Activated B cell treated with CpG ODN at 0.5 μM for 24 hours (primary cell): ENCODE measurements at regions of chr10 and their contacts with region 1.

Region 1: DNA sequence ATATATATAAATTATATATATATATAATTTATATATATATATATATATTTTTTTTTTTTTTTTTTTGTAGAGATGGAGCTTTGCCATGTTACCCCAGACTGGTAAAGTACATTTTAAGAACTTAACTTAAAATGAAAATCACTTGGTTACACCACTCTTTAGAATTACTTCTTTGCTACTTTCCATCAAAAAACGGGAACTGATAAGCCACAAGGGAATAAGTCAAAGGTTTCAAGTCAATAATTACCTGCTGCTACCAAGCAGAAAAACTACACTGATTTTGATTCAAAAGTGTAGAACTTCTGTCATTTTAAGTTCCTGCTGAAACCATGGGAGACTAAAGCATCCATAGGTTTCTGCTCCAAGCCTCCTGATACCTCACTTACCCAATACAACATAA is 12.2 kb downstream of the PPA1 start:
- DNase-seq: no peak
- ATAC-seq: peak; percentile 42
- H3K4me3 Mint-ChIP-seq: peak overlapping the region; percentile 25
- H3K27ac Mint-ChIP-seq: no peak overlapping the region
- H3K4me1 Mint-ChIP-seq: peaks cover 17% of the 10 kb centered on the region
- H3K27me3 Mint-ChIP-seq: no peaks in the 10 kb centered on the region
- CTCF ChIP-seq: no peak

Region 2: GRCh38 chr10:70233109-70233938 is 12.3 kb after region 1 on chr10 and contains the start of gene PPA1:
- CTCF ChIA-PET with region 1: interaction called, 51 read pairs
- POLR2A ChIA-PET with region 1: interaction called, 4 read pairs
- intact Hi-C with region 1: loop called (anchors 1 kb)
- DNase-seq: peak; percentile 100
- ATAC-seq: peak; percentile 96
- H3K4me3 Mint-ChIP-seq: peak within 1 kb of the TSS; percentile 92
- H3K27ac Mint-ChIP-seq: peak within 1 kb of the TSS; percentile 92
- H3K4me1 Mint-ChIP-seq: peaks cover 17% of the 10 kb centered on the region
- H3K27me3 Mint-ChIP-seq: no peaks in the 10 kb centered on the region
- CTCF ChIP-seq: no peak
- total RNA-seq, gene PPA1: 107 and 118 TPM in 2 replicates

Region 3: GRCh38 chr10:70272925-70273316 is 51.9 kb after region 1 on chr10:
- CTCF ChIA-PET with region 1: interaction called, 38 read pairs
- POLR2A ChIA-PET with region 1: interaction called, 7 read pairs
- intact Hi-C with region 1: loop called (anchors 1 kb)
- DNase-seq: no peak
- ATAC-seq: peak; percentile 86
- H3K4me3 Mint-ChIP-seq: peak overlapping the region; percentile 57
- H3K27ac Mint-ChIP-seq: peak overlapping the region; percentile 83
- H3K4me1 Mint-ChIP-seq: peaks cover 33% of the 10 kb centered on the region
- H3K27me3 Mint-ChIP-seq: no peaks in the 10 kb centered on the region
- CTCF ChIP-seq: no peak

Region 4: GRCh38 chr10:70348228-70348850 is 127.3 kb after region 1 on chr10:
- CTCF ChIA-PET with region 1: interaction called, 27 read pairs
- POLR2A ChIA-PET with region 1: interaction called, 3 read pairs
- intact Hi-C with region 1: loop called (anchors 1 kb)
- DNase-seq: no peak
- ATAC-seq: peak; percentile 71
- H3K4me3 Mint-ChIP-seq: no peak overlapping the region
- H3K27ac Mint-ChIP-seq: no peak overlapping the region
- H3K4me1 Mint-ChIP-seq: no peaks in the 10 kb centered on the region
- H3K27me3 Mint-ChIP-seq: no peaks in the 10 kb centered on the region
- CTCF ChIP-seq: no peak

Region 5: DNA sequence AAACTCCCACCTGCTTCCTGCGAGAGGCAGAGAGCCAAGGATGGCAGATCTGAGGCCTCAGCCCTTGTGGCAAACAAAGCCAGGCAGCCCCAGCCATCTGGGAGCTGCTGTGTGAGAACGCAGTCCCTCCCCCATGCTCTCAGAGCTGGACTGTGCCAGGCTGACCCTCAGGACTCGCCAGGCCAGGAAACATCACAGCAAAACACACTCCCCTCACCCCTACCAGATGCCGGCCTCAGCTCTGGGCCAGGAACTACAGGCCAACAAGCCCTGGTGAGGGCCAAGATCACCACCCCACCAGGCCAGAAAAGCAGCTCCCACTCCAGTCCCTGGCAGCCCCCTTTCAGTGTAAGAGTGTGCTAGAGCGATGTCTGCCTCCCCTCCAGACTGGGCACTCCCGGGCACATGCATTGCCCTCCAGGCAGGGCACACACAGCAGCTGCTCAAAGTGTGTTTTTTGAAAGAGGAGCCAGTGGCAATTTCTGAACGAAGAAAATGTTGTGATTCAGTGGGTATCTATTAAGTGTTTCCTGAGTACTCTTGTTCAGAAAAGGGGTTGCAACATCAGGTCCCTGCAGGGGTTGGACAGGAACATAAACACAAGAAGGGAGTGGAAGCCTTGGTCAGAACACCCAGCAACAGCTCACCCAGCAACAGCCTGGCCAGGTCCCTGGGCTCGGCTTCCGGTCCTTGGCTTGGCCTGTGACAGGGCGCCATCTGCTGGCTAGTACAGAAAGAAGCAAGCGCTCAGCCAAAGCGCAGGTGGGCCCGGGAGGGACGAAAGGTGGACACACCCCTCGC is 143.1 kb after region 1 on chr10:
- CTCF ChIA-PET with region 1: interaction called, 373 read pairs
- POLR2A ChIA-PET with region 1: interaction called, 26 read pairs
- intact Hi-C with region 1: loop called (anchors 1 kb)
- DNase-seq: peak; percentile 74
- ATAC-seq: peak; percentile 99
- H3K4me3 Mint-ChIP-seq: peak overlapping the region; percentile 24
- H3K27ac Mint-ChIP-seq: no peak overlapping the region
- H3K4me1 Mint-ChIP-seq: peaks cover 15% of the 10 kb centered on the region
- H3K27me3 Mint-ChIP-seq: peaks cover 2% of the 10 kb centered on the region
- CTCF ChIP-seq: peak; percentile 25

Region 6: GRCh38 chr10:70404036-70404786 is 183.2 kb after region 1 on chr10 and contains the start of gene EIF4EBP2:
- CTCF ChIA-PET with region 1: interaction called, 9 read pairs
- POLR2A ChIA-PET with region 1: no interaction called
- intact Hi-C with region 1: loop called (anchors 1 kb)
- DNase-seq: peak; percentile 100
- ATAC-seq: peak; percentile 98
- H3K4me3 Mint-ChIP-seq: peak within 1 kb of the TSS; percentile 92
- H3K27ac Mint-ChIP-seq: peak within 1 kb of the TSS; percentile 80
- H3K4me1 Mint-ChIP-seq: peaks cover 32% of the 10 kb centered on the region
- H3K27me3 Mint-ChIP-seq: no peaks in the 10 kb centered on the region
- CTCF ChIP-seq: no peak
- total RNA-seq, gene EIF4EBP2: 38.7 and 40.6 TPM in 2 replicates

Region 7: DNA sequence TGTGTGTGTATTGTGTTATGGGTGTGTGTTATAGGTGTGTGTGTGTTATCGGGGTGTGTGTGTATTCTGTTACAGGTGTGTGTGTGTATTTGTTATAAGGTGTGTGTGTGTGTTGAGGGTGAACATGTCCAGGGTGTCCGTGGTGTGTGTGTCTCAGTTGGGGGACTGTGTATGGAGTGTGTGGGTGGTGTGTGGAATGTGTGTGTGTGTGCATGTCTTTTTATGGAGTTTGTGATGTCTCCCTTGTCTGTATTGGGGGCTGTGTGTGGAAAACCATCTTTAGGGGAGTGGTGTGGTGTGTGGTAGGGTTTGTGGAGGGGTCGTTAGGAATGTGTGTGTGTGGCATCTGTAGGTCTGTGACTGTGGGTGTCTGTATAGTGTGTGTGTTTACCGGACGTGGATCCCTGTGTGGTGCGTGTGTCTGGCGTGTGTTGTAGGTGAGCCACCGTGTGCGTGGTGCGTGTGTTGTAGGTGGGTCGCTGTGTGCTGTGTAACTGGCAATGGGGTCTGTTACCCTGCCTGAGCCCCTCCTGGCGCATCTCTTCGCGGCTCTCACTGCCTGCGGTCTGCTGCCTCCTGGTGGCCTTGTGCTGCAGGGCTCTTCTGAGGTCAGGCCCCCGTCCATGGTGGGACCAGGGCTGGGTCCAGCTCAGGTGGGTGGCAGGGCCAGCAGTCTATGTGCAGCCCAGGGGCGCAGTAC is 319.2 kb after region 1 on chr10:
- CTCF ChIA-PET with region 1: no interaction called
- POLR2A ChIA-PET with region 1: no interaction called
- intact Hi-C with region 1: loop called (anchors 5 kb)
- DNase-seq: peak; percentile 33
- ATAC-seq: peak; percentile 47
- H3K4me3 Mint-ChIP-seq: no peak overlapping the region
- H3K27ac Mint-ChIP-seq: no peak overlapping the region
- H3K4me1 Mint-ChIP-seq: no peaks in the 10 kb centered on the region
- H3K27me3 Mint-ChIP-seq: no peaks in the 10 kb centered on the region
- CTCF ChIP-seq: no peak